Activated CD4-positive, alpha-beta memory T cell treated with anti-CD3 and anti-CD28 coated beads for 36 hours (primary cell): ENCODE measurements at regions of chr12 and their contacts with region 1.

Region 1: GRCh38 chr12:107287436-107288413 is 194.4 kb upstream of the CRY1 start:
- DNase-seq: peak; percentile 75
- H3K4me3 Mint-ChIP-seq: no peak overlapping the region
- H3K27ac Mint-ChIP-seq: peak overlapping the region; percentile 54
- H3K4me1 Mint-ChIP-seq: peaks cover 16% of the 10 kb centered on the region
- H3K27me3 Mint-ChIP-seq: no peaks in the 10 kb centered on the region

Region 2: DNA sequence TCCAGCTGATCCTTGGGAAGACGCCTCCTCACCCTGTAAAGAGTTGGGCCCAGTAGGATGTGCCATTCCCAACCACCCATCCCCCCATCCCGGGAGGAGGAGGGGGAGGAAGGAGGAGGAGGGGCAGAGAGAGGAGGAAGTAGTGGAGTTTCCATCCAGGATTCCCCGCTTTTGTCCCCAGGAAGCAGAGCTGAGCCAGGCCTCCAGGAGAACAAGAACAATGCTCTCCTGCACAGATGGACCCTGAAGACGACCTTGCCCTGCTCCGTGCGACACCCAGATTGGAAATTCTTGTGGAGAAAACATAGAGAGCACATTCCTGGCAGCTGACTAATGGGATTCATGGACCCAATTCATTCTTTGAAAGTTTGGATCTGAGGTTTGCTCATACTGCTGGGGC is 62.1 kb before region 1 on chr12:
- CTCF ChIA-PET with region 1: no interaction called
- POLR2A ChIA-PET with region 1: no interaction called
- intact Hi-C with region 1: loop called (anchors 2 kb)
- DNase-seq: no peak
- H3K4me3 Mint-ChIP-seq: no peak overlapping the region
- H3K27ac Mint-ChIP-seq: no peak overlapping the region
- H3K4me1 Mint-ChIP-seq: peaks cover 3% of the 10 kb centered on the region
- H3K27me3 Mint-ChIP-seq: peaks cover 19% of the 10 kb centered on the region

Region 3: GRCh38 chr12:107702106-107702505 is 414.4 kb after region 1 on chr12:
- CTCF ChIA-PET with region 1: no interaction called
- POLR2A ChIA-PET with region 1: no interaction called
- intact Hi-C with region 1: no loop called
- DNase-seq: no peak
- H3K4me3 Mint-ChIP-seq: no peak overlapping the region
- H3K27ac Mint-ChIP-seq: no peak overlapping the region
- H3K4me1 Mint-ChIP-seq: no peaks in the 10 kb centered on the region
- H3K27me3 Mint-ChIP-seq: no peaks in the 10 kb centered on the region